ENCODE measurements at regions of chr12 and their contacts with region 1.

Region 1: GRCh38 chr12:52372216-52373154 is 5.2 kb upstream of the KRT85 start:
- DNase-seq: peak; percentile 78 to 90 (median 86)
- H3K4me3 ChIP-seq: no peak overlapping the region
- H3K27ac ChIP-seq: no peak overlapping the region
- H3K4me1 ChIP-seq: no peaks in the 10 kb centered on the region
- H3K27me3 ChIP-seq: peaks cover 0 to 7% (median 5%) of the 10 kb centered on the region in 5 experiments

Region 2: DNA sequence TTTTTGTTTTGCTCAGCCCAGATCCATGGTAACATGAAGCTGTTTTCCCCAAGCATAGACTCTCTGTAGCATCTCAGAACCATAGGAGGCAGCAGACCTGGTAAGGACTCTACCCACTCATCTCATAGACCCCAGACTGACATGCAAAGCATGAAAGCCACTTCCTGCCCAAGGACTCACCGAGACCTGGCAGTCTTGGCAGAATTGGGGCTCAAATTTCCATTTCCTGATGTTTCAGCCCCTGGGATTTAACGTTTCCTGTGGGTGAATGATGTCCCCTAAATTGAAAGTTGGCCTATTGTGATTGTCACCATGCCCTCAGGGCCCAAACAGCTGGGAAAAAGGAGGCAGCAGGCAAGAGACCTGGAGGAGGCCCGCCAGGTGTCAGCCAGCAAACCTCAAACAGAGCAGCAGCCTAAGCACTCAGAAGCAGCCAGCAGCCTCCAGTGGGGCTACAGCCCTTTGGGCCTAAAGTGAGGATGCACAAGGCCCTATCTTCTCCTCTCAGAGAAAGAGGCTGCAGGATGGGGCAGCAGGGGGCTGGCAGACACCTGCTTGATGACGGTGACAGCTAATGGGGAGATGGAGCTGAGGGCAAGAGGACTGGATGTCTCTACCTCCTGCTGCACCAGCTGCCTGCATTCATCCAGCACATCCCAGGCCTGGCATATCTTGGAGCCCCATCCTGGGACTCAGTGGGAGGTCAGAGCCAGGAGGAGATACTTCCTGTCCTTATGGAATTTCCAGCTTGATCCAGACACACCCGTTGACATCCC is 13.7 kb before region 1 on chr12:
- CTCF ChIA-PET with region 1: interaction called, 49 read pairs
- POLR2A ChIA-PET with region 1: no interaction called
- DNase-seq: peak; percentile 14 to 45 (median 31)
- H3K4me3 ChIP-seq: no peak overlapping the region
- H3K27ac ChIP-seq: no peak overlapping the region
- H3K4me1 ChIP-seq: peaks cover 0 to 8% (median 2%) of the 10 kb centered on the region in 4 experiments
- H3K27me3 ChIP-seq: peaks cover 0 to 3% (median 0%) of the 10 kb centered on the region in 5 experiments

Region 3: GRCh38 chr12:52506858-52507715 is 134.6 kb after region 1 on chr12:
- CTCF ChIA-PET with region 1: interaction called, 12 read pairs
- POLR2A ChIA-PET with region 1: no interaction called
- DNase-seq: peak; percentile 74 to 91 (median 90)
- H3K4me3 ChIP-seq: no peak overlapping the region
- H3K27ac ChIP-seq: no peak overlapping the region
- H3K4me1 ChIP-seq: peaks cover 0 to 2% (median 0%) of the 10 kb centered on the region in 4 experiments
- H3K27me3 ChIP-seq: peaks cover 0 to 17% (median 0%) of the 10 kb centered on the region in 5 experiments

Region 4: GRCh38 chr12:52870351-52871290 is 498.1 kb after region 1 on chr12:
- CTCF ChIA-PET with region 1: interaction called, 25 read pairs
- POLR2A ChIA-PET with region 1: interaction called, 3 read pairs
- DNase-seq: peak; percentile 61 to 72 (median 63)
- H3K4me3 ChIP-seq: no peak overlapping the region
- H3K27ac ChIP-seq: no peak overlapping the region
- H3K4me1 ChIP-seq: peaks cover 0 to 39% (median 30%) of the 10 kb centered on the region in 4 experiments
- H3K27me3 ChIP-seq: no peaks in the 10 kb centered on the region

Measured in common myeloid progenitor, CD34-positive (primary cell).